ENCODE measurements at regions of chr11 and their contacts with region 1.

Region 1: DNA sequence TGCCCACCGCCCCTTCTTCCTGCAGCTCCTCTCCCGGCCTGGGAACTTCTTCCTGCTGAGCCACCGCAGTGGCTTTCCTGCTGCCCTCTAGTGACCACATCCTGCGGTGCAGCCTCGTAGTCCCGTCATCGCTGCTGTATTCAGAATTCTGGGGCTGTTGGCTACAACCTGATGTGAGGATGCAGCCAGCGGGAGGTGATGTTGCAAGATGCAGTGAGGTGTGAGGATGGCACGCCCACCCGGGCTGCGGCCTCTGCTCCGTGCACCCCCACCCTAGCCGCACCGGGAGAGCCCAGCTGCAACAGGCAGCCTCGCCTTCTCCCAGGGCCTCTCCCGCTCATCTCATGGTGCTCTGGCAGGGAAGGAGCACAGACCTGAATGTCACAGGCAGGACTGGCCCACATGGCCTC is 10.1 kb downstream of the CHST1 start:
- DNase-seq: peak; percentile 83 to 92
- ATAC-seq: peak; percentile 82
- H3K4me3 ChIP-seq: no peak overlapping the region
- H3K27ac ChIP-seq: no peak overlapping the region
- H3K4me1 ChIP-seq: no peaks in the 10 kb centered on the region
- H3K27me3 ChIP-seq: no peaks in the 10 kb centered on the region

Region 2: DNA sequence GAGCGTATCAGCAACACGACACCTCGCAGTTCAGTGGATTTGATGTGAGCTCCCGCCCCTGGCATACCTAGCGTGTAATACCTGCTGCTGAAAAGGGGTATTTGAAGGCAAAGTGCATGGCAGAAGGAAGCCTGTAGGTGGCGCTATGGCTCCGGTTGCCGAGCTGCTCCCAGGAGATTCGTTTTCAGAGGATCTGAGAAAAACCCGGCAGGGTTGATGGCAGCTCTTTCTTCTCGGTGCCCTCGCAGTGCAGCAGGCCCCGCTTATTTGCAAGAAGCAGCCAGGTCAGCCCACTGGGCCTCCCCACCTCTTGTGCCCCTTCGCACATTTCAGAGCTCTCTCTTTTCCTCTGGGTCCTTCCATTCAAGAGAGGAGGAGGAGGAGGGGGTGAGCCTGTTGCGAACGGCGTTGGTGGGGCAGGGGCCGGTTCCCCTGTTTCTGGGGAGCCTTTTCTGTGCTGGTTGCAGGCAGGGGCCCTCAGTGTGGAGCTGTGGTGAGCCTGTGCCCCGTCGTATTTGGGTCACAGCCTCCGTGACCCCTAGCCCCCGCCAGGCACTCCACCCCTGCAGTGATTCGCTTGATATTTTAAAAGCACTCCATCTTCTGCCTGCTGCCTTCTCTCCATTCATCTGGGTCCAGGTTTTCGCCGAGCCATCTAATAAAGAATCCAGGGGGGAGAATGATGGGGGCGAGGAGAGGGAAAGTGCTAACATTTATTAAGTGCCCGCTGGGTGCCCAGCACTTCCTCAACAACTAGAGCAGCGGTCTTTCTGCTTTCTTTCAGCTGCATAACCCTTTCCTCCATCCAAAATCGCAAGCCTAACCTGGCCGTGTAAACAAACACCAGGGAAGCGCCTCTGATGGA is 283.9 kb before region 1 on chr11:
- intact Hi-C with region 1: loop called in 1 of 2 experiments (anchors 2 kb)
- DNase-seq: peak; percentile 75 to 84
- ATAC-seq: no peak
- H3K4me3 ChIP-seq: no peak overlapping the region
- H3K27ac ChIP-seq: no peak overlapping the region
- H3K4me1 ChIP-seq: no peaks in the 10 kb centered on the region
- H3K27me3 ChIP-seq: no peaks in the 10 kb centered on the region

Region 3: GRCh38 chr11:45580399-45580798 is 75.0 kb before region 1 on chr11:
- intact Hi-C with region 1: loop called in 1 of 2 experiments (anchors 10 kb)
- DNase-seq: no peak
- ATAC-seq: no peak
- H3K4me3 ChIP-seq: no peak overlapping the region
- H3K27ac ChIP-seq: no peak overlapping the region
- H3K4me1 ChIP-seq: no peaks in the 10 kb centered on the region
- H3K27me3 ChIP-seq: peaks cover 0 to 2% of the 10 kb centered on the region in 2 donors

Region 4: DNA sequence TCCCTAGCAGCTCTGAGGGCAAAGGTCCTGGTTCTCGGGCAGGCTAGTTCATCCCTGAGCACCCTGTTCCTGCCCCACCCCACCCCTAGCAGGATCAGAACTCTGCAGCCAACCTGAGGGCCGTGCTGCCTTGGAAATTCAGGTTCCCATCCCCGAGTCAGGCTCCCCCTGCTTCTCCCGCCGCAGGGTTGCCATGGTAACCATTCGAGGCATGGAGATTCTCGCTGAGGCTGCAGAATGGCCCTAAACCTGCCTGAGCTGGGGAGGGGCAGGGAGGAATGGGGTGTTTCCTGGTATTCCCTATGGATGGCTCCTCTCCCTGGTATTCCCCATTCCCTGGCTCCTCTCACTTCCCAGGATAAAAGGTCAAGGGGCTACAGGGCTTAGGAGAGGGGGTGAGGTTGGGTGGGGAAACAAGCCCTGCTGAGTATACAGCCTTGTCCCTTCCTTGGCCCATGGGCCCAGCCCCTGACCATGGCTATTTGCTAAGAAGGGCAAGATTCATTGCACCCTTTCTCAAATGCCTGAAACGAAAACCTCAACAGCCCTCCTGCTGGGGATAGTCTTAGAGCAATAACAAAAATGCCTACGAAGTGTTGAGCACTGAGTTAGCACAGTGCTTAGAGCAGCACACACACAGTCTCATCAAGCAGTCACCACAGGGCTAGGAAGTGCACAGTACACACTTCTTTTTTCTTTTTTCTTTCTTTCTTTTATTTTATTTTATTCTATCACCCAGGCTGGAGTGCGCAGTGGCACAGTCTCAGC is 48.7 kb before region 1 on chr11:
- intact Hi-C with region 1: no loop called
- DNase-seq: no peak
- ATAC-seq: no peak
- H3K4me3 ChIP-seq: no peak overlapping the region
- H3K27ac ChIP-seq: no peak overlapping the region
- H3K4me1 ChIP-seq: no peaks in the 10 kb centered on the region
- H3K27me3 ChIP-seq: no peaks in the 10 kb centered on the region

Region 5: DNA sequence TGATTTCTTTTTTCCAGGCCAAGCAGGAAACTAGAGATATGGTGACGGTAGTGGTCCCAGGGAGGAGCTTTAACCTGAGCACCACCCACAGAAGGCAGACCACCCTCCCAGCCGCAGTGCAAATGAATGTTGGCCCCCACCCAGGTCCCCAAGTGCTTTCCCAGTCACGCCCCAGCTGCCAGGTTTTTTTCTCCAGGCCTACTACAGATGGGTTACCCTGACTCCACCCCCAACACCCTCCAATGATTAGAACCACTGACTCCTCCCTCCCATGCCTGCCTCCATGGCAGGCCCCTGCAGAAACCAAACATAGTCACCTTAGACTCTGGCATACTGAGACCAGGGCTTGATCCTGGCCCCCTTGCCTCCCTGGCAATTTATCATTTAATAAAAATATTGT is 68.8 kb after region 1 on chr11:
- intact Hi-C with region 1: no loop called
- DNase-seq: no peak
- ATAC-seq: no peak
- H3K4me3 ChIP-seq: no peak overlapping the region
- H3K27ac ChIP-seq: no peak overlapping the region
- H3K4me1 ChIP-seq: no peaks in the 10 kb centered on the region
- H3K27me3 ChIP-seq: no peaks in the 10 kb centered on the region

Region 6: GRCh38 chr11:45745065-45745811 is 89.9 kb after region 1 on chr11:
- intact Hi-C with region 1: loop called (anchors 5 to 10 kb)
- DNase-seq: peak; percentile 87
- ATAC-seq: peak; percentile 90
- H3K4me3 ChIP-seq: no peak overlapping the region
- H3K27ac ChIP-seq: peak overlapping the region; percentile 83 to 90
- H3K4me1 ChIP-seq: peaks cover 1 to 6% of the 10 kb centered on the region in 2 donors
- H3K27me3 ChIP-seq: no peaks in the 10 kb centered on the region

Measured in aorta (tissue), 5 donors.